ENCODE measurements at regions of chr10 and their contacts with region 1.

Region 1: GRCh38 chr10:79347226-79347893 is at the start of gene PPIF:
- DNase-seq: peak; percentile 64 to 98
- H3K4me3 ChIP-seq: peak within 1 kb of the TSS; percentile 54 to 77 (median 58)
- H3K27ac ChIP-seq: peak within 1 kb of the TSS; percentile 43; the same call in 1 of the 2 replicates
- H3K4me1 ChIP-seq: peaks cover 0 to 14% (median 6%) of the 10 kb centered on the region in 4 experiments; a peak in 6 of 7 replicates
- H3K27me3 ChIP-seq: no peaks in the 10 kb centered on the region
- CTCF ChIP-seq: peak; percentile 76 to 90 (median 83)
- EP300 ChIP-seq: no peak
- POLR2A ChIP-seq: peak in 1 of 2 experiments; percentile 67; a peak in 1 of 3 replicates
- RAD21 ChIP-seq: peak; percentile 59 to 68
- total RNA-seq, gene PPIF: 70.2 and 74.9 TPM in 2 replicates

Region 2: GRCh38 chr10:79260786-79261740 is 86.3 kb before region 1 on chr10:
- CTCF ChIA-PET with region 1: no interaction called
- POLR2A ChIA-PET with region 1: no interaction called
- DNase-seq: no peak
- H3K4me3 ChIP-seq: no peak overlapping the region
- H3K27ac ChIP-seq: no peak overlapping the region
- H3K4me1 ChIP-seq: peaks cover 0 to 14% (median 6%) of the 10 kb centered on the region in 4 experiments; a peak in 6 of 7 replicates
- H3K27me3 ChIP-seq: no peaks in the 10 kb centered on the region; a peak in 1 of 7 replicates
- CTCF ChIP-seq: no peak
- EP300 ChIP-seq: no peak
- POLR2A ChIP-seq: no peak
- RAD21 ChIP-seq: no peak

Region 3: GRCh38 chr10:79316671-79317431 is 30.5 kb before region 1 on chr10:
- CTCF ChIA-PET with region 1: interaction called, 10 read pairs
- POLR2A ChIA-PET with region 1: interaction called, 7 read pairs
- DNase-seq: no peak
- H3K4me3 ChIP-seq: no peak overlapping the region
- H3K27ac ChIP-seq: no peak overlapping the region
- H3K4me1 ChIP-seq: peaks cover 4 to 23% (median 16%) of the 10 kb centered on the region in 4 experiments
- H3K27me3 ChIP-seq: no peaks in the 10 kb centered on the region
- CTCF ChIP-seq: no peak
- EP300 ChIP-seq: no peak
- POLR2A ChIP-seq: 0 out of 3 replicates have a peak, but pooled peaks of 1 of the 2 experiments have one; percentile 5
- RAD21 ChIP-seq: no peak

Region 4: DNA sequence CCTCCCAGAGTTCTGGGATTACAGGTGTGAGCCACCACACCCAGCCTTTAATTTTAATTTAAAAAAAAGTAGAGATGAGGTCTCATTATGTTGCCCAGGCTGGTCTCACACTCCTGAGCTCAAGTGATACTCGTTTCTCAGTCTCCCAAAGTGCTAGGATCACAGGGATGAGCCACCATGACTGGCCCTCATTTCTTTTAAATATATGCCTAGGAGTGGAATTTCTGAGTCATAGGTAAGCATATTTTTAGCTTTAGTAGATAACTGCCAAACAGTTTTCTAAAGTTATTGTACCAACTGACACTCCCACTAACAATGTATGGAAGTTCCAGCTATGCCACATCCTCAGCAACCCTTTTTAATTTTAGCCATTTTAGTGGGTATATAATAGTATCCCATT is 13.9 kb before region 1 on chr10:
- CTCF ChIA-PET with region 1: interaction called, 29 read pairs
- POLR2A ChIA-PET with region 1: interaction called, 5 read pairs
- DNase-seq: no peak
- H3K4me3 ChIP-seq: no peak overlapping the region
- H3K27ac ChIP-seq: no peak overlapping the region
- H3K4me1 ChIP-seq: peaks cover 0 to 11% (median 0%) of the 10 kb centered on the region in 4 experiments; a peak in 3 of 7 replicates
- H3K27me3 ChIP-seq: no peaks in the 10 kb centered on the region
- CTCF ChIP-seq: no peak
- EP300 ChIP-seq: no peak
- POLR2A ChIP-seq: no peak
- RAD21 ChIP-seq: no peak

Region 5: DNA sequence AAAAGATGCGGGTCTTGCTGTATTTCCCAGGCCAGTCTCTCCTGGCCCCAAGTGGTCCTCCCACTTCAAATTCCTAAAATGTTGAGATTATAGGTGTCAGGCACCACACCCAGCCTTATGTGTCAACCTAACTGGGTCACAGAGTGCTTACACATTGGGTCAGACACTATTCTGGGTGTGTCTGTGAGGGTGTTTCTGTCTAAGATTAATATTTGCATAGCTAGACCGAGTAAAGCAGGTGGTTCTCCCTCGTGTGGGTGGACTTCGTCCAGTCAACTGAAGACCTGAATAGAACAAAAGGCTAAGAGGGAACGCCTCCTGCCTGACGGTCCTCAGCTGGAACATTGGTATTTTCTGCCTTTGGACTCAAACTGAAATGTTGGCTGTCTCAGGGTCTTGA is 11.4 kb after region 1 on chr10:
- CTCF ChIA-PET with region 1: interaction called, 50 read pairs
- POLR2A ChIA-PET with region 1: interaction called, 12 read pairs
- DNase-seq: peak in 1 of 2 experiments; percentile 28
- H3K4me3 ChIP-seq: no peak overlapping the region
- H3K27ac ChIP-seq: no peak overlapping the region
- H3K4me1 ChIP-seq: no peaks in the 10 kb centered on the region
- H3K27me3 ChIP-seq: no peaks in the 10 kb centered on the region
- CTCF ChIP-seq: no peak
- EP300 ChIP-seq: no peak
- POLR2A ChIP-seq: no peak
- RAD21 ChIP-seq: no peak

Measured in H1 (cell line).